Panc1 (cell line): ENCODE measurements at regions of chr16 and their contacts with region 1.

Region 1: DNA sequence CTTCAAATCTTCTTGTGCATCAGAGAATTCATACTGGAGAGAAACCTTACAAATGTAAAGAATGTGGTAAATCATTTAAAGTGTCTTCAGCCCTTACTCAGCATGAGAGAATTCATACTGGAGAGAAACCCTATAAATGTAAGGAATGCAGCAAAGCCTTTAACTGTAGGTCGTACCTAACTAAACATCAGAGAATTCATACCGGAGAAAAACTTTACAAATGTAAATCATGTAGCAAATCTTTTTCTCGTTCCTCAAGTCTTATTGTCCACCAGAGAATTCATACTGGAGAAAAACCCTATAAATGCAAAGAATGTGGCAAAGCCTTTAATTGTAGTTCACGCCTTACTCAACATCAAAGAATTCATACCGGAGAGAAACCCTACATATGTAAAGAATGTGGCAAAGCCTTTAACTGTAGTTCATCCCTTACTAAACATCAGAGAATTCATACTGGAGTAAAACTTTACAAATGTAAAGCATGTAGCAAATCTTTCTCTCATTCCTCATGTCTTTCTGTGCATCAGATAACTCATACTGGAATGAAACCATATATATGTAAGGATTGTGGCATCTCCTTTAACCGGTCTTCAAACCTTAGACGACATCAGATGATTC is 118.5 kb upstream of the ZNF267 start:
- DNase-seq: no peak
- ATAC-seq: no peak
- H3K4me3 ChIP-seq: no peak overlapping the region
- H3K27ac ChIP-seq: no peak overlapping the region
- H3K4me1 ChIP-seq: no peaks in the 10 kb centered on the region
- H3K27me3 ChIP-seq: no peaks in the 10 kb centered on the region
- CTCF ChIP-seq: no peak

Region 2: GRCh38 chr16:31664713-31665482 is 90.2 kb before region 1 on chr16:
- CTCF ChIA-PET with region 1: no interaction called
- POLR2A ChIA-PET with region 1: no interaction called
- in situ Hi-C with region 1: no loop called
- intact Hi-C with region 1: loop called (anchors 10 kb)
- DNase-seq: no peak
- ATAC-seq: no peak
- H3K4me3 ChIP-seq: no peak overlapping the region
- H3K27ac ChIP-seq: no peak overlapping the region
- H3K4me1 ChIP-seq: no peaks in the 10 kb centered on the region
- H3K27me3 ChIP-seq: no peaks in the 10 kb centered on the region
- CTCF ChIP-seq: no peak

Region 3: DNA sequence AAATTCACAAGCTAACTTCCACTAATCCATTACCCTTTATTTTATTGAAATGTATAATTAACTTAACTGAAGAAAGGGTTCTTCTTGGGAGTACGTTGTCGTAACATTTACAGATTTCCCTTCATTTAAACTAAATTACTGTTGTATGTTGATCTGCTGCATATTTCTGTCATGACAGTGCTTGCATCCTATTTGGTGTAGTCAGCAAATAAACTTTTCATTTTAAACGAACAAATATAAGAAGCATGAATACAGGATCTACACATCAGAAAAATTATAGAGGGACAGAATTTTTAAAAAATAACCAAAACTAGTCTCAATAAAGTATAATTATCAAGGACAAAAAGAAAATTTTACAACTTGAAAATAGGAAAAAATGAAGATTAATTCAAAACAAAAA is 52.0 kb after region 1 on chr16:
- CTCF ChIA-PET with region 1: no interaction called
- POLR2A ChIA-PET with region 1: no interaction called
- in situ Hi-C with region 1: no loop called
- intact Hi-C with region 1: loop called (anchors 10 kb)
- DNase-seq: no peak
- ATAC-seq: no peak
- H3K4me3 ChIP-seq: no peak overlapping the region
- H3K27ac ChIP-seq: no peak overlapping the region
- H3K4me1 ChIP-seq: no peaks in the 10 kb centered on the region
- H3K27me3 ChIP-seq: no peaks in the 10 kb centered on the region
- CTCF ChIP-seq: no peak